ENCODE measurements at regions of chr10 and their contacts with region 1.

Region 1: GRCh38 chr10:11178606-11179515 is 161.2 kb downstream of the CELF2 start:
- DNase-seq: peak; percentile 96
- H3K4me3 Mint-ChIP-seq: no peak overlapping the region
- H3K27ac Mint-ChIP-seq: peak overlapping the region; percentile 94
- H3K4me1 Mint-ChIP-seq: peaks cover 90% of the 10 kb centered on the region
- H3K27me3 Mint-ChIP-seq: no peaks in the 10 kb centered on the region

Region 2: GRCh38 chr10:11150231-11150731 is 28.6 kb before region 1 on chr10:
- intact Hi-C with region 1: loop called (anchors 1 kb)
- DNase-seq: peak; percentile 89
- H3K4me3 Mint-ChIP-seq: peak overlapping the region; percentile 86
- H3K27ac Mint-ChIP-seq: peak overlapping the region; percentile 98
- H3K4me1 Mint-ChIP-seq: peaks cover 87% of the 10 kb centered on the region
- H3K27me3 Mint-ChIP-seq: no peaks in the 10 kb centered on the region

Region 3: DNA sequence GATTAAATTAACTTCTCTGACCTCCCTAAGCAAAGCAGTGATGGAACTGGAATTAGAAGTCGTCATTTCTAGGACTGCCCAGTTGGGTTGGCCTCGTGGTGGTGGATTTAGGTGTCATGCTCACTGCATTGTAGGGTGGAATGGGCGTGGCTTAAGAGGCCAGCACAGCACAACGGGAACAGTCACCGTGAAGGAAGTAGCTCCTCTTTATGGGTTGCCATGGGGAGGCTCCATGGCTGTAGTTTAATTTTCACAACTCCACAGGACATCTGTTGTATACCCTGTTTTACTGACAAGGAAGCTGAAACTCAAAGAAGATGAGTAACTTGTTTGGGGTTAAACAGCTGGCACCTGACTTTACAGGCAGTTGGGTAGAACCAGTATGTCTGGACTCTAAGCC is 47.1 kb after region 1 on chr10:
- intact Hi-C with region 1: loop called (anchors 2 kb)
- DNase-seq: peak; percentile 87
- H3K4me3 Mint-ChIP-seq: peak overlapping the region; percentile 66
- H3K27ac Mint-ChIP-seq: peak overlapping the region; percentile 92
- H3K4me1 Mint-ChIP-seq: peaks cover 71% of the 10 kb centered on the region
- H3K27me3 Mint-ChIP-seq: no peaks in the 10 kb centered on the region

Region 4: DNA sequence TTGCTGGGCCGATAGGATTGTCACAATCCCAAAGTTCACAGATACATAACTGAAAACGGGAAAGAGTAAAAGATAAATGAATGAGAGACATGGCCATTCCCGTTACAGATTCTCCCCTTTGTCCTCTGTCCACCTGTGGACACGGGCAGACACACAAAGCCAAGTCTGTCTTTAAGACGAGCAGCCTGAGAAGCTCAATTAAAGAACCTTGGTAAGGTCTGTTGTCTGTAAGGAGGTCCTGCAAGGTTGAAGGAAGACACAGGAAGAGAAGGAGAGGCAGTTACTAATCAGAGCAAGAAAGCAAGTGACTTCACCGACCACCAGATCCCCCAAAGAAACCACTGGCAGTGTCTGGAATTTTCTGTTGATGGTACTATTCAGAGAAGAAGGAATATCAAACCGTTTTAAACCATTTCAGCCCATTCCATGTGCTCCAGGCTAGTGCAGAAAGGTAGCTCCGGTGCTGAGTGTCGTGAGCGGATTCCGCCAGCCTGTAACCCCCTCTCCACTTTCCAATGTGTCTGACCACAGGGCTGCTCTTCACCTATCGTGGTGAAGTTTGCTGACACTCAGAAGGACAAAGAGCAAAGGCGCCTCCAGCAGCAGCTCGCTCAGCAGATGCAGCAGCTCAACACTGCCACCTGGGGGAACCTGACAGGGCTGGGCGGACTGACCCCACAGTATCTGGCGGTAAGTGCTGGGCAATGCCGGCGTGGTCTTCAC is 91.4 kb after region 1 on chr10:
- intact Hi-C with region 1: no loop called
- DNase-seq: peak; percentile 87
- H3K4me3 Mint-ChIP-seq: no peak overlapping the region
- H3K27ac Mint-ChIP-seq: peak overlapping the region; percentile 78
- H3K4me1 Mint-ChIP-seq: peaks cover 50% of the 10 kb centered on the region
- H3K27me3 Mint-ChIP-seq: no peaks in the 10 kb centered on the region

Measured in activated CD4-positive, alpha-beta T cell treated with anti-CD3 and anti-CD28 coated beads, Interleukin-2, amount 10 ng/mL, durations not matched to agents 24 days and 14 days (primary cell).